A673 (cell line): ENCODE measurements at regions of chr16 and their contacts with region 1.

Region 1: GRCh38 chr16:57479205-57479975 is 6.9 kb downstream of the DOK4 start:
- DNase-seq: peak; percentile 73
- H3K4me3 ChIP-seq: peak overlapping the region; percentile 49
- H3K27ac ChIP-seq: peak overlapping the region; percentile 30
- H3K4me1 ChIP-seq: peaks cover 15% of the 10 kb centered on the region
- H3K27me3 ChIP-seq: no peaks in the 10 kb centered on the region
- CTCF ChIP-seq: no peak

Region 2: GRCh38 chr16:57648590-57649442 is 169.4 kb after region 1 on chr16:
- CTCF ChIA-PET with region 1: no interaction called
- POLR2A ChIA-PET with region 1: no interaction called
- intact Hi-C with region 1: no loop called
- DNase-seq: peak; percentile 87
- H3K4me3 ChIP-seq: no peak overlapping the region
- H3K27ac ChIP-seq: no peak overlapping the region
- H3K4me1 ChIP-seq: no peaks in the 10 kb centered on the region
- H3K27me3 ChIP-seq: no peaks in the 10 kb centered on the region
- CTCF ChIP-seq: peak; percentile 100

Region 3: GRCh38 chr16:57734925-57735754 is 255.8 kb after region 1 on chr16:
- CTCF ChIA-PET with region 1: no interaction called
- POLR2A ChIA-PET with region 1: interaction called, 13 read pairs
- intact Hi-C with region 1: no loop called
- DNase-seq: peak; percentile 100
- H3K4me3 ChIP-seq: peak overlapping the region; percentile 61
- H3K27ac ChIP-seq: peak overlapping the region; percentile 87
- H3K4me1 ChIP-seq: peaks cover 11% of the 10 kb centered on the region
- H3K27me3 ChIP-seq: no peaks in the 10 kb centered on the region
- CTCF ChIP-seq: no peak

Region 4: DNA sequence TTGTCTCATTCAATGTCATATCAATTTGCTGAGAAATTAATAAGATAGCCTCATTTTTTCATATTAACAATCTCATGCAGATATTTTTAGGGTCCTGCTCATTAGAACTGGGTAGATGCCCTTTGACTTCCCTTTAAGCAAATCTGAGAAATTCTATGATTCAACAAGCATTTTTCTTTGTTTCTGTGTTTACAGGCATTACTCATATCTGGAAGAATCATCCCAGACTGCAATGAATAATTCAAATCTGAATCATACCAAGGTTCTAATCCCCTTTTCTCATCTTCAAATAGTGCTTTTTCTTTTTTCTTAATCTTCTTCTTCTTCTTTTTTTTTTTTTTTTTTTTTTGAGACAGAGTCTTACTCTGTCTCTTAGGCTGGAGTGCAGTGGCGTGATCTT is 392.1 kb after region 1 on chr16:
- CTCF ChIA-PET with region 1: no interaction called
- POLR2A ChIA-PET with region 1: no interaction called
- intact Hi-C with region 1: no loop called
- DNase-seq: peak; percentile 66
- H3K4me3 ChIP-seq: no peak overlapping the region
- H3K27ac ChIP-seq: no peak overlapping the region
- H3K4me1 ChIP-seq: peaks cover 19% of the 10 kb centered on the region
- H3K27me3 ChIP-seq: no peaks in the 10 kb centered on the region
- CTCF ChIP-seq: no peak